ENCODE measurements at regions of chr6 and their contacts with region 1.

Region 1: GRCh38 chr6:44074439-44075136 is 52.7 kb downstream of the MRPL14 start:
- DNase-seq: peak; percentile 51
- H3K4me3 Mint-ChIP-seq: peak overlapping the region; percentile 77
- H3K27ac Mint-ChIP-seq: peak overlapping the region; percentile 30
- H3K4me1 Mint-ChIP-seq: peaks cover 38% of the 10 kb centered on the region
- H3K27me3 Mint-ChIP-seq: peaks cover 17% of the 10 kb centered on the region

Region 2: DNA sequence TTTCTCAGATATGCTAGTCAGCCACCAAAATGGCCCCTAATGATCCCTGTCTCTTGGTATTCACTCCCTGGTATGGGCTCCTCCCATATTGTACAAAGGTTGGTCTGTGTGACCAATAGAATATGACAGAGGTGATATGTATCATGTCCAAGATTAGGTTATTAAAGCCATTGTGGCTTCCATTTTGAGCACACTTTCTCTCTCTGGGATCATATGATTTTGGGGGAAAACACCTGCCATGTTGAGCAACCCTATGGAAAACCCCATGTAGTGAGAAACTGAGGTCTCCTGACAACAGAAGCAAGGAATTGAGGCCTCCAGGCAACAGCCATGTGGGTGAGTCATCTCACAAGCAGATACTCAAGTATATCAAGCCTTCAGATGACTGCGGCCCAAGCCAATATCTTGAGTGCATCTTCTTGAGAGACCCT is 698.0 kb before region 1 on chr6:
- intact Hi-C with region 1: no loop called
- DNase-seq: peak; percentile 18
- H3K4me3 Mint-ChIP-seq: no peak overlapping the region
- H3K27ac Mint-ChIP-seq: peak overlapping the region; percentile 0
- H3K4me1 Mint-ChIP-seq: peaks cover 35% of the 10 kb centered on the region
- H3K27me3 Mint-ChIP-seq: peaks cover 7% of the 10 kb centered on the region

Region 3: GRCh38 chr6:43575772-43576551 is 498.6 kb before region 1 on chr6 and contains the starts of genes POLH and XPO5:
- intact Hi-C with region 1: loop called (anchors 10 kb)
- DNase-seq: peak; percentile 90
- H3K4me3 Mint-ChIP-seq: peak within 1 kb of the TSS; percentile 91
- H3K27ac Mint-ChIP-seq: peak within 1 kb of the TSS; percentile 86
- H3K4me1 Mint-ChIP-seq: peaks cover 43% of the 10 kb centered on the region
- H3K27me3 Mint-ChIP-seq: no peaks in the 10 kb centered on the region
- total RNA-seq, gene POLH: 35.7 and 39.1 TPM in 2 replicates
- total RNA-seq, gene XPO5: 135 and 149 TPM in 2 replicates

Region 4: DNA sequence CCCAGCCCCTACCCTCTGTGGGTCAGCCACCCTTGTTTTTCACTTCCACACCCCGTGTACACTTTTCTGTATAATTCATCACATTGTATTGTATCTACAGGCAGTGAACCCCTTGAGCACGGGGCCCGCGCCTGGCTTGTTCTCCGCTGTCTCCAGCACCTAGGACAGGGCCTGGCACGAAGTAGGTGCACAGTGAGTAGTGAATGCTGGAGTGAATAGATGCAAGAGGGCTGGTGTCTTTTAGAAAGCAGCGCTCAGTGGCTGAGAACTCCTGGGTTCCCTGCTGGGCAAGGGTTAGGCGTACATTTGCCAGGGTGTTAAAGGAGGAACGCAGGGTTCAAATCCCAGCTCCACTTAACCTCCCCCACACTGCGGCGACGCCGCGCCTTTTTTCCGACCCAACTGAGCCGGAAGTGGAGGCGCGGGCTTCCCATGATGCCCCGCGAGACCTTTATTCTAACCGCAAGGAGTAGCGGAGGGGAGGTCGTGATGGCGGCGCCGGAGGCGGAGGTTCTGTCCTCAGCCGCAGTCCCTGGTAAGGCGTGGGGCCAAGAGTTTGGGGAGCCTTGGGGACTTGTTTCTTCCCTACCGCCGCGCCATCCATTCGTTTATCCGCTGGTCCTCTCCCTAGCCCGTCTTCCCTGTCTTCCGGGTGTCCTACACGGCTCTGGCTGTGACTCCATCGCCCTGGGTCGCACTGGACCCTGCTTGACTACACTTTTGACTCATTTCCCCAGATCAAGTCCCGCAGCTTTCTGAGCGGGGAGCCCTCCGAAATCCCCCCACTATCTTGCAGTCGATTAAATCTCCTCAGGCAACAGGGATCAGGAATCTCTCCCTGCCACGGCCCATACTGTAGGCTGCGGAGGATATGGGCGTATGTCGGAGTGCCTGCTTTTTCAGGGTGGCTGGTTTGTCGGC is 438.9 kb before region 1 on chr6 and contains the start of gene MAD2L1BP:
- intact Hi-C with region 1: loop called (anchors 2 kb)
- DNase-seq: peak; percentile 88
- H3K4me3 Mint-ChIP-seq: peak within 1 kb of the TSS; percentile 94
- H3K27ac Mint-ChIP-seq: peak within 1 kb of the TSS; percentile 90
- H3K4me1 Mint-ChIP-seq: peaks cover 52% of the 10 kb centered on the region
- H3K27me3 Mint-ChIP-seq: no peaks in the 10 kb centered on the region
- total RNA-seq, gene MAD2L1BP: 34.8 and 39.0 TPM in 2 replicates

Region 5: DNA sequence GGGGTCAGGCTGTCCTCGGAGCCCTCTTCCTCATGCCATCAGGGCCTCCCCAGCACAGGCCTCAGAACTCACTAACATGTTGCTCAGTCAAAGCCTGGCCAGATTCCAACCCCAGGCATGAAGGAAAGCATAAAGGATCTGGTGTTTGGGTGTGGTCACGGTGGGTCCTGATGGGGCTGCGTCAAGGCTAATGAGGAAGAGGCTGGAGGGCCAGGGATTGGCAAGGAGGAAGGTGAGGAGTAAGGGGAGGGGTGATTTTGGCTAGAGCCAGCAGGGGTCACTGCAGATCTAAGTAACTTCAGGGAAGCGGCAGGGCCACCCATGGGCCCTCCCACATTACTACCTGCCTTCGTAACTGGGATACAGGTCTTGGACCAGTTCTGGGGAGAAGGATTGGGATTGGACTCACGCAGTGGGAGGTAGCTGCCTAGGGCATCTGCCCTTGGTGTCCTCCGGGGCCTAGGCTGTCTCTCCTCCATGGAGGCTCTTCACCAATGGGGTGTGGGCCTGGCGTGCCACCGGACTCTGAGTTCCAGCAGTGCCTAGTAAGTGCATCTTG is 350.8 kb before region 1 on chr6:
- intact Hi-C with region 1: loop called (anchors 1 kb)
- DNase-seq: peak; percentile 50
- H3K4me3 Mint-ChIP-seq: no peak overlapping the region
- H3K27ac Mint-ChIP-seq: no peak overlapping the region
- H3K4me1 Mint-ChIP-seq: peaks cover 32% of the 10 kb centered on the region
- H3K27me3 Mint-ChIP-seq: peaks cover 6% of the 10 kb centered on the region

Region 6: DNA sequence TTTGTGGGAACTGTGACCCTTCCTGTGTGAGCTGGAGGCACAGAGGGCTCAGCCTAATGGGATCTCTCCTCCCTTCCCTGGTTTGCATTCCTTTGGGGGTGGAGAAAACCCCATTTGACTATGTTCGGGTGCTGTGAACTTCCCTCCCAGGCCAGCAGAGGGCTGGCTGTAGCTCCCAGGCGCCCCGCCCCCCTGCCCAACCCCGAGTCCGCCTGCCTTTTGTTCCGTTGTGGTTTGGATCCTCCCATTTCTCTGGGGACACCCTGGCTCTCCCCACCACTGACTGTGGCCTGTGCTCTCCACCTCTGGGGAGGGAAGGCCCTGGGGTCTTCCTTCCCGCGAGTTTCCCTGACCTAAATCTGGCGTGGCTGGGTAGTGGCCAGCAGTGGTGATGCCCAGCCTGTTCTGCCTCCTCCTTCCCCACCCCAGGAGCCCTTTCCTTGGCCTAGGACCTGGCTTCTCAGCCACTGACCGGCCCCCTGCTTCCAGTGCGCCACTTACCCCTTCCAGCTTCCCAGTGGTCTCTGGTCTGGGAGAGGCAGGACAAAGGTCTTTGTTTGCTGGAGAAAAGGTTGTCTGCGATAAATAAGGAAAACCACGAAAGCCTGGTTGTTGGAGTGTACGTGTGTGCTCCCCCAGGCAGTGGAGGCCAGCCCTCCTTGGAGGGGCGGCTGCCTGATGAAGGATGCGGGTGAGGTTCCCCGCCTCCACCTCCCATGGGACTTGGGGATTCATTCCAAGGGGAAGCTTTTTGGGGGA is 299.6 kb before region 1 on chr6:
- intact Hi-C with region 1: loop called (anchors 1 kb)
- DNase-seq: peak; percentile 57
- H3K4me3 Mint-ChIP-seq: peak overlapping the region; percentile 56
- H3K27ac Mint-ChIP-seq: peak overlapping the region; percentile 27
- H3K4me1 Mint-ChIP-seq: peaks cover 39% of the 10 kb centered on the region
- H3K27me3 Mint-ChIP-seq: peaks cover 2% of the 10 kb centered on the region

Region 7: GRCh38 chr6:44022296-44022661 is 52.3 kb before region 1 on chr6:
- intact Hi-C with region 1: no loop called
- DNase-seq: no peak
- H3K4me3 Mint-ChIP-seq: no peak overlapping the region
- H3K27ac Mint-ChIP-seq: no peak overlapping the region
- H3K4me1 Mint-ChIP-seq: no peaks in the 10 kb centered on the region
- H3K27me3 Mint-ChIP-seq: peaks cover 10% of the 10 kb centered on the region

Region 8: GRCh38 chr6:44034391-44034861 is 40.2 kb before region 1 on chr6:
- intact Hi-C with region 1: no loop called
- DNase-seq: no peak
- H3K4me3 Mint-ChIP-seq: no peak overlapping the region
- H3K27ac Mint-ChIP-seq: no peak overlapping the region
- H3K4me1 Mint-ChIP-seq: peaks cover 12% of the 10 kb centered on the region
- H3K27me3 Mint-ChIP-seq: peaks cover 11% of the 10 kb centered on the region

Region 9: DNA sequence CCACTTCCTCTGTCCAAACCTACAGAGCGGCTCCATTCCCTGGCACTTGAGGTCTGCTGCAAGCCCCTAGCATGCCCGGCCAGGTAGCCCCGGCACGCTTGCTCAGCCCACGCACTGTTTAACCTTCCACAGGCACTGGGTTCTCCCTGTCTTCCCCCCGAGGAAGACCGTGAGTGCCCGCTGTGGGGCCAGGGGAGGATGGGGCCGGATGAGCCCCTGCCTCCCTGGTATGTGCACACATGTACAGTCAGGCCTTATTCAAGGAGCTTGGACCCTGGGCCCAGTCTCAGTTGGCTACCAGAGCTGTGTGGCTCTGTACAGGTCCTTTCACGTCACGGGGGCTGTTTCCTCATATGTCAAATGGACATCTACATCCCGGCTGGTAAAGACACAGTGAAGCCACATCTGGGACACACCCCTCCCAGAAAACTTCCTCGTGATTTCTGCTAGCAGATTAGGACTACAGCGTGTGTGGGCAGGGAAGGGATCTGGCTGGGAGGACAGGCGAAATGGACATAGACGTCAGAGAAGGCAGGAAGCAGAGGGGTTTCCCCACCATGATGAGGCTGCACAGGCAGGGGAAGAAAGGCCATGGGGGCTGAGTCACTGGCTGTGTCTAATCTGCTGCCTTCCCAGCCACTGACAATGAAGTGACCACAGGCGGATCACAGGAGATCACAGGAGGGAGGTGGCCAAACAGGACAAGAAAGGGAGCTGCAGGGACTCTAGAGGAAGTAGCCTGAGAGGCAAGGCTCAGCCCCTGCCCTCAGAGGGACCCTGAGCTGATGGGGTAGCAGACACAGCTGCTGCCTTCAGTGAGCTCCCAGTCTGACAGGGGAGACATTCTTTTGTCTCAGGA is 10.3 kb before region 1 on chr6:
- intact Hi-C with region 1: loop called (anchors 1 kb)
- DNase-seq: no peak
- H3K4me3 Mint-ChIP-seq: no peak overlapping the region
- H3K27ac Mint-ChIP-seq: no peak overlapping the region
- H3K4me1 Mint-ChIP-seq: peaks cover 9% of the 10 kb centered on the region
- H3K27me3 Mint-ChIP-seq: peaks cover 5% of the 10 kb centered on the region